ENCODE measurements at regions of chr16 and their contacts with region 1.

Region 1: DNA sequence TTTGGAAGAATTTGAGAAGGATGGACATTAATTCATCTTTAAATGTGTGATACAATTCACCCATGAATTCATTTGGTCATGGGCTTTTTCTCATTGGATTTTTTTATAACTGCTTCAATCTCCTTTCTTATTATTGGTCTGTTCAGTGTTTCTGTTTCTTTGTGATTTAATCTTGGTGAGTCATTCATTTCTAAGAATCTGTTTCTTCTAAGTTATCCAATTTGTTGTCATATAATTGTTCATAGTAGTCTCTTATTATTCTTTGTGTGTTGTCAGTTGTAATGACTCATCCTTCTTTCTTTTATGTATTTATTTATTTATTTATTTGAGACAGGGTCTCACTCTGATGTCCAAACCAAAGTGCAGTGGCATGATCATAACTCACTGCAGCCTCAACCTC is 146.1 kb upstream of the ZNF267 start:
- DNase-seq: no peak
- H3K4me3 Mint-ChIP-seq: no peak overlapping the region
- H3K27ac Mint-ChIP-seq: no peak overlapping the region
- H3K4me1 Mint-ChIP-seq: no peaks in the 10 kb centered on the region
- H3K27me3 Mint-ChIP-seq: no peaks in the 10 kb centered on the region
- CTCF ChIP-seq: no peak

Region 2: GRCh38 chr16:31678649-31679325 is 48.8 kb before region 1 on chr16:
- CTCF ChIA-PET with region 1: no interaction called
- intact Hi-C with region 1: loop called (anchors 10 kb)
- DNase-seq: no peak
- H3K4me3 Mint-ChIP-seq: no peak overlapping the region
- H3K27ac Mint-ChIP-seq: no peak overlapping the region
- H3K4me1 Mint-ChIP-seq: no peaks in the 10 kb centered on the region
- H3K27me3 Mint-ChIP-seq: no peaks in the 10 kb centered on the region
- CTCF ChIP-seq: no peak

Region 3: GRCh38 chr16:31703526-31704128 is 23.9 kb before region 1 on chr16:
- CTCF ChIA-PET with region 1: no interaction called
- intact Hi-C with region 1: no loop called
- DNase-seq: no peak
- H3K4me3 Mint-ChIP-seq: no peak overlapping the region
- H3K27ac Mint-ChIP-seq: no peak overlapping the region
- H3K4me1 Mint-ChIP-seq: peaks cover 18% of the 10 kb centered on the region
- H3K27me3 Mint-ChIP-seq: no peaks in the 10 kb centered on the region
- CTCF ChIP-seq: no peak

Region 4: GRCh38 chr16:31807086-31807485 is 79.5 kb after region 1 on chr16:
- CTCF ChIA-PET with region 1: no interaction called
- intact Hi-C with region 1: no loop called
- DNase-seq: no peak
- H3K4me3 Mint-ChIP-seq: no peak overlapping the region
- H3K27ac Mint-ChIP-seq: no peak overlapping the region
- H3K4me1 Mint-ChIP-seq: no peaks in the 10 kb centered on the region
- H3K27me3 Mint-ChIP-seq: no peaks in the 10 kb centered on the region
- CTCF ChIP-seq: no peak

Measured in Calu3 (cell line).